ENCODE measurements at regions of chr6 and their contacts with region 1.

Region 1: DNA sequence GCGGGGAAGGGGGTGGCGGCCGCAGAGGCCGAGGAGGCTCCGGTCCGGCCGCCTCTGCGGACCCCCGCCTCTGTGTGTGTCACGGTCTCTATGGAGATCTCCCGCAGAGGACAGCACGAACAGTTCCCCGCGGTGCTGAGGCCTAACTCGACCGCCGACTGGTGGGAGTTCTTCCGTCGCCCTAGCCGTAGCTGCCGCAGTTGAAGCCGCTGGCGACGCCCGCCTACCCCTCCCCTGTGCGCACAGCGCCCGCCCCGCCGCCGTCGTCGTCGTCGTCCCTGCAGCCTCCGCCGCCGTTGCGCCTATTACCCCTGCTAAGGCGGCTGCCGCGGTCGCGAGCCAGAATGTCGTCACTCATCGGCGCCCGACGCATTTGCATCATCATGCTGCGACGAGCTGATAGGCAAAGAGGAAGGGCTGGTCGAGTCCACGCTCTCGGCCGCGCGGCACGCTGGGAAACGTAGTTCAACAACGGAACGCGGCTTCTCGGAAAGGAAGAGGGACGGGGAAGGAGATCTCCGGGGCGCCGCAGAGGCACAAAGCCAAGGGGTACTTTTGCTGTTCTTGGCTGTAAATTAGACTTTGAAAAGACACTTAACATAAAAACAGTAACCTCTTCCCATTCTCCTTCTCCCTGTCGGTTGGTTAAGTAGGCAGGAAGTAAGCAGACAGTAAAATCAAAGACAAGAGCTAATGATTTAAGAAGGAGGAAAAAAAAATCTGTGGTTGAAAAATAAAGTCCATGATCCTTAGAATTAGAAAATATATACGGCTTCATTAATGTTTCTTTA is at the start of gene NUP153:
- DNase-seq: peak; percentile 98
- H3K4me3 Mint-ChIP-seq: peak within 1 kb of the TSS; percentile 86
- H3K27ac Mint-ChIP-seq: peak within 1 kb of the TSS; percentile 97
- H3K4me1 Mint-ChIP-seq: peaks cover 13% of the 10 kb centered on the region
- H3K27me3 Mint-ChIP-seq: no peaks in the 10 kb centered on the region
- CTCF ChIP-seq: no peak
- total RNA-seq, gene NUP153: 33.3 and 36.5 TPM in 2 replicates

Region 2: DNA sequence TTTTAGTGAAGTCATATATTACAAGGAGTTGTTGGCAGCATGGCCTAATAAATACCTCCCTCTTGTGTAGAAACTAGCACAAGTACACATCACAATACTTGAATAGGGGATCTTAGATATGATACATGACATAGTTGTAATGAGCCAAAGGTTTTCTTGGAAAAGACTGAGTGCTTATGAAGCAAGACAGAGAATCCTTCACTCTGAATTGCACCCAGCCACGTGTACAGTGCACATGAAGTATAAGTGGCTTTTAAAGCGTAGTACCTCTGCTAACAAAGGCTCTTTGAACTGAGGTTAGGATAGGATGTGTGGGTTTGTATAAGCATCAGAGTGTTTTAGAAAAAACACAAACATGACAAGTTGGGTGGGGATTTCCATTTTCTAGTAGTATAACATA is 750.4 kb before region 1 on chr6:
- CTCF ChIA-PET with region 1: no interaction called
- POLR2A ChIA-PET with region 1: no interaction called
- intact Hi-C with region 1: no loop called
- DNase-seq: no peak
- H3K4me3 Mint-ChIP-seq: no peak overlapping the region
- H3K27ac Mint-ChIP-seq: no peak overlapping the region
- H3K4me1 Mint-ChIP-seq: no peaks in the 10 kb centered on the region
- H3K27me3 Mint-ChIP-seq: no peaks in the 10 kb centered on the region
- CTCF ChIP-seq: no peak

Region 3: DNA sequence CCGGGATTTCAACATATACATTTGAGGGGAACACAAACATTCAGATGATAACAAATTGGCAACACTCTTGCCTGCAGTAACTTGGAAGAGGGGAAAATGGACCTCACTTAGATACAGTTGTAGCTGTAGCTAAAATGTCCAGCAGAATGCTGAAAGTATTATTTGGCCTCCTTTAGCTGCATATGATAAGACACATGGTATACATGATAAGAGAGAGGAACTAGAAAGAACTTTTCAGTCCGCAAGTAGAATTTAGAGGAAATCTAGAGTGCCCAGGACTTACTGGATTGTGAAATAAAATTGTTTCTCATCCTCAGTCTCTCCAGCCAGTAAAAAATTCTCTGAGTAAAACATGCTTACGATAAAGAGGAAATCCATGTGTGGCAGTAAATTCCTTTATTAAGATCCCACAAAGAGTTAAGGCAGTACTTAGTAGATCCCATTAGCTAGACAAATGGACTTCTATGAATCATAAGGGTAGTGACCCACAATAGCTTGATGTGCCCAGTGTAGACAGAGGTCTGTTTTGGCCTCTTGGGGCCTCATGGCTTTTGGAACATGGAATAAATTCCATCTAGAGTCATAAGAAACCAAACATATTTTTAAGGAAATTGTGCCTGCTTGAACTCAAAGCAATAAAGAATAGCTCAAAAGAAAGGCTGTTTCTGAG is 513.5 kb before region 1 on chr6:
- CTCF ChIA-PET with region 1: no interaction called
- POLR2A ChIA-PET with region 1: no interaction called
- intact Hi-C with region 1: no loop called
- DNase-seq: no peak
- H3K4me3 Mint-ChIP-seq: no peak overlapping the region
- H3K27ac Mint-ChIP-seq: no peak overlapping the region
- H3K4me1 Mint-ChIP-seq: no peaks in the 10 kb centered on the region
- H3K27me3 Mint-ChIP-seq: no peaks in the 10 kb centered on the region
- CTCF ChIP-seq: no peak

Region 4: GRCh38 chr6:17405944-17406245 is 300.9 kb before region 1 on chr6:
- CTCF ChIA-PET with region 1: no interaction called
- POLR2A ChIA-PET with region 1: no interaction called
- intact Hi-C with region 1: no loop called
- DNase-seq: no peak
- H3K4me3 Mint-ChIP-seq: no peak overlapping the region
- H3K27ac Mint-ChIP-seq: no peak overlapping the region
- H3K4me1 Mint-ChIP-seq: no peaks in the 10 kb centered on the region
- H3K27me3 Mint-ChIP-seq: no peaks in the 10 kb centered on the region
- CTCF ChIP-seq: no peak

Region 5: GRCh38 chr6:17650656-17651309 is 56.0 kb before region 1 on chr6:
- CTCF ChIA-PET with region 1: no interaction called
- POLR2A ChIA-PET with region 1: no interaction called
- intact Hi-C with region 1: loop called (anchors 2 kb)
- DNase-seq: no peak
- H3K4me3 Mint-ChIP-seq: no peak overlapping the region
- H3K27ac Mint-ChIP-seq: no peak overlapping the region
- H3K4me1 Mint-ChIP-seq: peaks cover 6% of the 10 kb centered on the region
- H3K27me3 Mint-ChIP-seq: no peaks in the 10 kb centered on the region
- CTCF ChIP-seq: no peak

Region 6: DNA sequence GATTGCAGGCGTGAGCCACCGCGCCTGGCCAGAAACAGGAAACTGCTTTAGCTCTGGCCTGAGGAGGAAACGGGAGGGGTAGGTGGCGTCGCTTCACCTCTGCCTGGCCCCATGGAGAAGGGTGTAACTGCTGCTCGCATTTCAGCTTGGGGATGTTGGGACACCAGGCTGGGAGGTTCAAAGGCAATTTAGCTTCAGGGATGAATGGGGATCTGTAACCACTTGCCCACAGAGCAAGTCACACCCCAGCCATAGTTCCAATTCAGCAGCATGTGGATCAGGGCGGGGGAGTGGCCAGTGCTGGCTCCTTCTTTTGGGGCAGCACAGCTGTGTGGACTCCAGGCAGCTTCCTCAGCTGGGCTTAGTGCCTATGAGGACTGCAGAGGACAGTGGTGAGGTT is 34.7 kb after region 1 on chr6:
- CTCF ChIA-PET with region 1: no interaction called
- POLR2A ChIA-PET with region 1: interaction called, 10 read pairs
- intact Hi-C with region 1: no loop called
- DNase-seq: peak; percentile 47
- H3K4me3 Mint-ChIP-seq: no peak overlapping the region
- H3K27ac Mint-ChIP-seq: no peak overlapping the region
- H3K4me1 Mint-ChIP-seq: no peaks in the 10 kb centered on the region
- H3K27me3 Mint-ChIP-seq: no peaks in the 10 kb centered on the region
- CTCF ChIP-seq: no peak

Measured in MCF 10A (cell line).